ENCODE measurements at regions of chr20 and their contacts with region 1.

Region 1: GRCh38 chr20:41232973-41233926 is 84.3 kb downstream of the ZHX3 start:
- DNase-seq: no peak
- H3K4me3 Mint-ChIP-seq: no peak overlapping the region
- H3K27ac Mint-ChIP-seq: no peak overlapping the region
- H3K4me1 Mint-ChIP-seq: peaks cover 30% of the 10 kb centered on the region
- H3K27me3 Mint-ChIP-seq: no peaks in the 10 kb centered on the region

Region 2: GRCh38 chr20:40728470-40728869 is 504.8 kb before region 1 on chr20:
- intact Hi-C with region 1: no loop called
- DNase-seq: no peak
- H3K4me3 Mint-ChIP-seq: no peak overlapping the region
- H3K27ac Mint-ChIP-seq: no peak overlapping the region
- H3K4me1 Mint-ChIP-seq: no peaks in the 10 kb centered on the region
- H3K27me3 Mint-ChIP-seq: peaks cover 18% of the 10 kb centered on the region

Region 3: GRCh38 chr20:40990542-40991120 is 242.6 kb before region 1 on chr20:
- intact Hi-C with region 1: loop called (anchors 2 kb)
- DNase-seq: peak; percentile 57
- H3K4me3 Mint-ChIP-seq: no peak overlapping the region
- H3K27ac Mint-ChIP-seq: peak overlapping the region; percentile 71
- H3K4me1 Mint-ChIP-seq: peaks cover 44% of the 10 kb centered on the region
- H3K27me3 Mint-ChIP-seq: no peaks in the 10 kb centered on the region

Region 4: DNA sequence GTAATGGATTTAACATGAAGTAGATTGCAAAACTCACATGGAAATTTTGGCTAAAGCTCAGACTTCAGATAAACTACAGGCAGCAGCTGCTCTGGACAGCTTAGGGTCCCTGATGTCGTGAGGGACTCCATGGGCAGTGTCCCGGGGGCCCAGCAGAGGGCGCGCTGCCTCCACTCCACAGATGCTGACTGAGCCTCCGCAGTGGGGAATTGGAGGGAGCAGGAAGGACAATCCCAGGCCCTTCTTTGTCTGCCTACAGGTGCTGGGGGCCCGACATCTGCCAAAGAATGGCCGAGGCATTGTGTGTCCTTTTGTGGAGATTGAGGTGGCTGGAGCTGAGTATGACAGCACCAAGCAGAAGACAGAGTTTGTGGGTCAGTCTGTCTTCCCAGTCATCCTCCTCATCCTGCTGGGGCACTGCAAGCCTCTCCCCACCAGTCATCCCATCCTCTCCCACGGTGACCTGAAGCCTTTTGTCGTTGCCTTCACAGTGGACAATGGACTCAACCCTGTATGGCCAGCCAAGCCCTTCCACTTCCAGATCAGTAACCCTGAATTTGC is 60.0 kb before region 1 on chr20:
- intact Hi-C with region 1: loop called (anchors 1 kb)
- DNase-seq: peak; percentile 35
- H3K4me3 Mint-ChIP-seq: no peak overlapping the region
- H3K27ac Mint-ChIP-seq: no peak overlapping the region
- H3K4me1 Mint-ChIP-seq: peaks cover 7% of the 10 kb centered on the region
- H3K27me3 Mint-ChIP-seq: no peaks in the 10 kb centered on the region

Region 5: DNA sequence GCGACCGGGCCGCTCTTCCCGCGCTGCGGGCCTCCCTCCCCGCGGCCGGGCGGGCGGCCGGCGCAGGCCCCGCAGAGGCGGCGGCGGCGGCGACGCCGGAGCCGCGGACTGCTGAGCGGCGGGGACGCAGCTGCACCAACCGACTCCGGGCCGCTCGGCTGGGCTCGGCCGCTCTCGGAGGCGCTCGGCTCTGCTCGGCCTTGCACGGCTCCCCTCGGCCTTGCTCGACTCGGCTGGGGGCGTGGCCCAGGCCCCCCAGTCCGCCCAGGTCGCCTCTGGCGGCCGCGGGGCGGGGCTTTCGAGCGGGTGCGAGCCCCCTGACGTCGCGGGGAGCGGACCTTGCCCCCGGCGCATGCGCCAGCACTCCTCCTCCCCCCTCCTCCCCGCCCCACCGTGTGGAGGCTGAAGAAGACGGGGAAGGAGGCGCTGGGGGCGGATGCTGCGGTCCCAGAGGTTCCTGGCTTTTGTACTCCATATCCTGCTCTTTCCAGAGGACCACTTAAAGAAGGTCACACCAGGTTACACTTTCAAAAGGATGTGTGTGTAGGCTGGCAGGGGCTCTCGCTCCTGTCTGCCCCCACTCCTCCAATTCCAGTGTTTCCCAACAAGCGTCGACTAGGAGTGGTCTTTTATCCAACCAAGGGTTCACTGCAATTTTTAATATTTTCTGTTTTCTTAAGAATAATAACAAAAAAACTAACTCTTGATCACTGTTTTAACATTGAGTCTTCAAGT is 84.5 kb after region 1 on chr20 and contains the start of gene ZHX3:
- intact Hi-C with region 1: loop called (anchors 1 kb)
- DNase-seq: peak; percentile 95
- H3K4me3 Mint-ChIP-seq: peak within 1 kb of the TSS; percentile 88
- H3K27ac Mint-ChIP-seq: peak within 1 kb of the TSS; percentile 82
- H3K4me1 Mint-ChIP-seq: peaks cover 11% of the 10 kb centered on the region
- H3K27me3 Mint-ChIP-seq: peaks cover 5% of the 10 kb centered on the region
- total RNA-seq, gene ZHX3: 9.5 and 11.9 TPM in 2 replicates

Region 6: DNA sequence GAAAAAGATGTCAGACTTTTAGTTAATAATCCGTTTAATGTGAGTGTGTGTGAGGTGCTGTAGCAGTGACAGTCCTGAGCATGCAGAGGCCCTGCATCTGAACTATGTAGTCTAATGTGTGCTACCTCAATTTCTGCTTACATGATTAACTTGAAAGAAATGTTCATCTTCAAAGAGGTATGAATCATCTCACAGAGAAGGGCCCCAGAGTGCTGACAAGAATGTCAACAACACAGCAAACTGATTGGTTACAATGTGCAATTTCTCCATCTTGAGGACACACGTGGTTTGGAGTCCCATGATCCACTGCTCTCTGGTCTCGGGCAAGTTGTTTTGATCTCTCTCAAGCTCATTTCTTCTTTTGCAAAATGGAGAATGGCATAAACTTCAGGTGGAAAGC is 195.0 kb after region 1 on chr20:
- intact Hi-C with region 1: loop called (anchors 5 kb)
- DNase-seq: peak; percentile 32
- H3K4me3 Mint-ChIP-seq: peak overlapping the region; percentile 69
- H3K27ac Mint-ChIP-seq: peak overlapping the region; percentile 94
- H3K4me1 Mint-ChIP-seq: peaks cover 46% of the 10 kb centered on the region
- H3K27me3 Mint-ChIP-seq: no peaks in the 10 kb centered on the region

Measured in activated T-helper 1 cell treated with anti-CD3 and anti-CD28 coated beads, Interleukin-12 subunit alpha, Interleukin-12 subunit beta, Interleukin-2, Interleukin-4 antibody, amounts not matched to agents 30 ng/mL and 10 ng/mL and 1 ng/mL, durations not matched to agents 14 hours and 24 hours and 36 hours (primary cell).